K562 (cell line): ENCODE measurements at regions of chr5 and their contacts with region 1.

Region 1: GRCh38 chr5:138575194-138576015 is at the start of gene HSPA9:
- DNase-seq: peak; percentile 97 to 100 (median 98)
- ATAC-seq: peak; percentile 90
- H3K4me3 ChIP-seq: peak within 1 kb of the TSS; percentile 72
- H3K27ac ChIP-seq: peak within 1 kb of the TSS; percentile 97
- H3K4me1 ChIP-seq: peaks cover 11 to 21% of the 10 kb centered on the region in 2 experiments; a peak in 4 of 5 replicates
- H3K27me3 ChIP-seq: no peaks in the 10 kb centered on the region
- CTCF ChIP-seq: no peak; a peak in 1 of 6 replicates
- EP300 ChIP-seq: peak; percentile 88
- POLR2A ChIP-seq: peak; percentile 95
- RAD21 ChIP-seq: peak in 1 of 2 experiments; percentile 13; a peak in 1 of 4 replicates
- polyA plus RNA-seq, gene HSPA9: 195 to 294 TPM

Region 2: GRCh38 chr5:138559937-138560336 is 15.5 kb before region 1 on chr5:
- CTCF ChIA-PET with region 1: no interaction called
- POLR2A ChIA-PET with region 1: interaction called, 16 read pairs
- in situ Hi-C with region 1: no loop called
- intact Hi-C with region 1: no loop called
- DNase-seq: no peak
- ATAC-seq: peak; percentile 4
- H3K4me3 ChIP-seq: no peak overlapping the region
- H3K27ac ChIP-seq: no peak overlapping the region
- H3K4me1 ChIP-seq: no peaks in the 10 kb centered on the region
- H3K27me3 ChIP-seq: no peaks in the 10 kb centered on the region
- CTCF ChIP-seq: no peak
- EP300 ChIP-seq: no peak
- POLR2A ChIP-seq: peak; percentile 55; the same call in 1 of the 2 replicates
- RAD21 ChIP-seq: no peak

Region 3: GRCh38 chr5:138632900-138633489 is 57.6 kb after region 1 on chr5:
- CTCF ChIA-PET with region 1: interaction called, 7 read pairs
- POLR2A ChIA-PET with region 1: interaction called, 3 read pairs
- in situ Hi-C with region 1: no loop called
- intact Hi-C with region 1: loop called (anchors 1 kb)
- DNase-seq: peak; percentile 51 to 82 (median 56)
- ATAC-seq: peak; percentile 94
- H3K4me3 ChIP-seq: no peak overlapping the region
- H3K27ac ChIP-seq: no peak overlapping the region
- H3K4me1 ChIP-seq: peaks cover 0 to 4% of the 10 kb centered on the region in 2 experiments; a peak in 1 of 5 replicates
- H3K27me3 ChIP-seq: peaks cover 0 to 23% of the 10 kb centered on the region in 2 experiments; a peak in 2 of 5 replicates
- CTCF ChIP-seq: peak; percentile 60 to 77 (median 71)
- EP300 ChIP-seq: no peak
- POLR2A ChIP-seq: no peak
- RAD21 ChIP-seq: peak; percentile 34 to 62

Region 4: DNA sequence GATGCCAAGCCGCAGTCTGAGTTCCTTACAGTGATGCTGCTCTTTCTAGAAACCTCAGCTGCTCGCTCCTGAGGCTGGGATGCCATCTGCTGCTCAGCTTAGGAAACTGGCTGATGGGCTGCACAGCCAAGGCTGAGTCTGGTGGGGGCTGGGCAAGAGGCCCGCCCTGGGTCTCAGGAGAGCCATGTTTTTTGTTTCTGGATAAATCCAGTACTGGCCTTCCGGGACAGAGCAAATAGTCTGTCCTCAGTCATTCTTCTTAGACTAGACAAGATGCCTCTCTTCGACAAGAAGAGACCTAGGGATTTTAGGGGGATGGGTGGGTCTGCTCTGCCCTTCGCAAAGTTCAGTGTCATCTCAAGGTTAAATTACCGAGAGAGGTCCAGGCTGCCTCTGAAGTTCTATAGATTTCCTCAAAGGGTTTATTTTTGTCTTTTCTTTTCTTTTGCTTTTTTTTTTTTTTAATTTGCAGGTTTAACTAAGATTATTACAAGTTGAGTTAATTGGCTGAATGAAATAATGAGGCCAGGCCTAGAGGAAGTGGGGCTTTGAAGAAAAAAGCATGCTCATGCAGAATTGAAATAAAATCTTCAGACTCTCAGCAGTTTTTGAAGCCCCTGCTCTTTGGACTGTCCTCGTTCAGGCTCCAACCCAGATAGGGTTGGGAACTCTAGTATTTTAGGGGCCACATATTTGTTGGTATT is 687.5 kb after region 1 on chr5:
- CTCF ChIA-PET with region 1: interaction called, 4 read pairs
- POLR2A ChIA-PET with region 1: no interaction called
- in situ Hi-C with region 1: loop called (anchors 10 kb)
- intact Hi-C with region 1: loop called (anchors 5 kb)
- DNase-seq: peak; percentile 72 to 87 (median 78)
- ATAC-seq: peak; percentile 98
- H3K4me3 ChIP-seq: no peak overlapping the region
- H3K27ac ChIP-seq: peak overlapping the region; percentile 34; the same call in 2 of the 3 replicates
- H3K4me1 ChIP-seq: peaks cover 0 to 12% of the 10 kb centered on the region in 2 experiments; a peak in 4 of 5 replicates
- H3K27me3 ChIP-seq: no peaks in the 10 kb centered on the region
- CTCF ChIP-seq: peak; percentile 87 to 93 (median 88)
- EP300 ChIP-seq: peak; percentile 7; the same call in 1 of the 2 replicates
- POLR2A ChIP-seq: no peak
- RAD21 ChIP-seq: peak; percentile 95